ENCODE measurements at regions of chr19 and their contacts with region 1.

Region 1: DNA sequence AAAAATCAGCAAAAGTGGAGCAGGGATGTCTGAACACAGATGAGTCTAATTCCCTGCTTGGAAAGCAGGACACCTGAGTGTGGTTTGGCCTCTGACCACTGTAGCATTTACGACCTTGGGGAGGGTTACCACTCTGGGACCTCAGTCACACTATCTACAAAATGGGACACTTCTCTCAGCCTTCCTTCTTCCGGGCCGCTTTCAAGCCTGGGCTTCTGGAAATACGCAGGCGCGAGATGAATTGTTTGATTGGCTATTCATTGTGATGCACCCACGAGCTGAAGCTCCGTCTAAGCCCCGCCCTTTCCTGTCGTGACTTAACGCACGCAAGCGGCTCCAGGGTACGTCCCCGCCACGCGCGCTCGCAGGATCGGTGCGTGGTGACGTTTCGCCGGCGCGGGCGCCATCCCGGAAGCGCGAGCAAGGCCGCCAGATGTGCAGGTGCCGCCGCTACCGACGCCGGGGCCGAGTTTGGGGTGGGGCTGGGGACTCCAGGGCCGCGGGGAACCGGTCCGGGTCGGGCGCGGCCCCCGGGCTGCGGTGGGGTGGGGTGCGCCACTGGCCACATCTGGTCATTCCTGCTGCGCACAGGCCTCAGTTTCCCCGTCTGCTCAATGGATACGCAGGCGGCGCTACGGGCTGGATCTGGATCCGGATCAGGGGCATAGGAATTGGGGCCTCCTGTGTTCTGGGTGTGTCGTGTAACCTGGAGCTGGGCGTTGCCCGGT is at the start of gene KXD1:
- DNase-seq: peak; percentile 94 to 99 (median 98)
- H3K4me3 ChIP-seq: peak within 1 kb of the TSS; percentile 80 to 99 (median 95)
- H3K27ac ChIP-seq: peak within 1 kb of the TSS; percentile 65 to 97 (median 90)
- H3K27me3 ChIP-seq: no peaks in the 10 kb centered on the region
- CTCF ChIP-seq: peak in 17 of 56 donors; percentile 5 to 48 (median 21)
- total RNA-seq, gene KXD1: 46.5 to 90.8 (median 64.8) TPM

Region 2: DNA sequence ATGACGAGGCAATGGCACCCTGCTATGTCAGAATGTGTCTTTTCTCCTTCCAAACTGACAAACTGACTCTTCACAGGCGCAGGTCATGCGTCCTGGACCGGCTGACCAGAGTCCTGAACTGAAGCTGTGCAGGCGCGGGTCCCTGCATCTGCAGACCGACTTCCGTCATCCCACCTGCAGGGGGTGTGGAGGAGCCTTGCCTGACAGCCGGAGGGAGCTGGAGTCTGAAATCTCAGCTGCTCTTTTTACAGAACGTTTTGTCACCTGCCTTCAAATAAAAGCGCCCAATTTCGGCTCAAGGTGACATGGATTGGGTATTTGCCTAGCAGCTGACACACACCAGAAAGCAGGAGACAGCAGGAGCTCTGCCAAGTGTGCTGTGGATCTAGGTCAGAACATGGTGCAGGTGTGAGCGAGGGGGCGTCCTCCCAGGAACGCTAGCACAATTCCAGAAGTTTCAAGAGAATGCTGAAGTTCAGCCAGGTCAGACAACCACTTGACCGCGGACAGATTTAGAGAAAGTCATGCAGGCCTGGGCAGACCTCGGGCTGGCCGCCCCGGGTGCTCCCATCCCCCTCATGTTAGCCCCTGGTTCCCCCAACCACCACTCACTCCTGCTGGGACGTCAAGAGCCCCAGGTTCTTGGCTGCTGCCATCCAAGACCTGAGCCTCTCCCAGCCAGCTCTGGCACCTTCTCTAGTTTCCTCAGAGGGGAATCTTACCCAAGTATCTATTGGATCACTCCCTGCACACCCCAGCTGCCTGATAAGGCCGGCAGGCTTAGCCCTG is 68.6 kb before region 1 on chr19:
- intact Hi-C with region 1: no loop called
- DNase-seq: peak in 4 of 10 donors; percentile 37 to 63 (median 51)
- H3K4me3 ChIP-seq: no peak overlapping the region
- H3K27ac ChIP-seq: peak overlapping the region in 44 of 59 donors; percentile 6 to 88 (median 46)
- H3K27me3 ChIP-seq: no peaks in the 10 kb centered on the region
- CTCF ChIP-seq: peak in 26 of 56 donors; percentile 5 to 40 (median 23)

Region 3: GRCh38 chr19:18571564-18572300 is 14.1 kb after region 1 on chr19 and contains the start of gene UBA52:
- intact Hi-C with region 1: loop called in 1 of 2 experiments (anchors 2 kb)
- DNase-seq: peak; percentile 94 to 98 (median 96)
- H3K4me3 ChIP-seq: peak within 1 kb of the TSS; percentile 72 to 100 (median 95)
- H3K27ac ChIP-seq: peak within 1 kb of the TSS; percentile 32 to 93 (median 82)
- H3K27me3 ChIP-seq: no peaks in the 10 kb centered on the region
- CTCF ChIP-seq: peak in 35 of 56 donors; percentile 1 to 59 (median 29)
- total RNA-seq, gene UBA52: 378 to 577 (median 453) TPM

Region 4: GRCh38 chr19:18594096-18594823 is 36.6 kb after region 1 on chr19:
- intact Hi-C with region 1: no loop called
- DNase-seq: peak in 6 of 10 donors; percentile 15 to 77 (median 56)
- H3K4me3 ChIP-seq: peak overlapping the region in 58 of 59 donors; percentile 17 to 65 (median 48)
- H3K27ac ChIP-seq: peak overlapping the region in 35 of 59 donors; percentile 2 to 75 (median 51)
- H3K27me3 ChIP-seq: peaks cover 0 to 26% (median 9%) of the 10 kb centered on the region in 45 donors
- CTCF ChIP-seq: peak; percentile 46 to 91 (median 78)